H1 (cell line): ENCODE measurements at regions of chr1 and their contacts with region 1.

Region 1: DNA sequence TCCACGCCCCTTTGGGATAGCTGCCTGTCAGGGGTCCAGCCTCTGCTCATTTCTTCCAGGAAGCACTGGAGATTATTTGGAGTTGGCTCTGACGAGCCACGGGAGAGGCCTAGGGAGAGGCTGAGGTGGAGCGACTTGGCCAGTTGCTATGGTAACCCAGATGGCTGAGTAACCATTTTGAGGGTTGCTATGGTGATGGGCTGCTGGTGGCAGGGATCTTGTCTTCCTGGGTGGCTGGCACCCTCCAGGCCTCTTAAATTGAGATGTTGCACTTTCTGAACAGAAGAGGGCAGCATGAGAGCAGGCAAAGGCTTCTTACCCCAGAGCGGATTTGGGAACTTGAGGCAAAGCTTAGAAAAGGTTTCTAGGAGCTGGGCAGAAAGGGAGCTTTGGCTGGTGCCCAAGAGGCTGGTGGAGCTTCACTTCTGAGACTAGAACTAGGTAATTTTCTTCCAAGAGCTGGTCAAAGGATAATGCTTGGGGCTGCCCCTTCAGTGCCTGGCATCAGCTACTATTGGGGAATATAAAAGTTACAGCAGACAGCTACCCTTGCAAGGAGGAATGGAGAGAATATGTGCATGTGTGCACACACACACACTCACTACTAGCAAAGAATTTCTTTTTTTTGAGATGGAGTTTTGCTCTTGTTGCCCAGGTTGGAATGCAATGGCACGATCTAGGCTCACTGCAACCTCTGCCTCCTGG is 72.5 kb downstream of the NDUFS5 start:
- DNase-seq: peak; percentile 75 to 89
- H3K4me3 ChIP-seq: no peak overlapping the region
- H3K27ac ChIP-seq: peak overlapping the region; percentile 21; the same call in 1 of the 2 replicates
- H3K4me1 ChIP-seq: peaks cover 7 to 13% (median 12%) of the 10 kb centered on the region in 4 experiments
- H3K27me3 ChIP-seq: no peaks in the 10 kb centered on the region
- CTCF ChIP-seq: peak; percentile 40 to 88 (median 88)
- EP300 ChIP-seq: peak in 1 of 2 experiments; percentile 39; a peak in 1 of 3 replicates
- POLR2A ChIP-seq: no peak
- RAD21 ChIP-seq: peak; percentile 98 to 99

Region 2: GRCh38 chr1:39158327-39159086 is 59.8 kb after region 1 on chr1:
- CTCF ChIA-PET with region 1: interaction called, 15 read pairs
- POLR2A ChIA-PET with region 1: interaction called, 3 read pairs
- DNase-seq: no peak
- H3K4me3 ChIP-seq: peak overlapping the region; percentile 21 to 44 (median 34); a peak in 7 of 8 replicates
- H3K27ac ChIP-seq: peak overlapping the region; percentile 48
- H3K4me1 ChIP-seq: peaks cover 13 to 37% (median 25%) of the 10 kb centered on the region in 4 experiments; a peak in 6 of 7 replicates
- H3K27me3 ChIP-seq: no peaks in the 10 kb centered on the region
- CTCF ChIP-seq: peak in 1 of 3 experiments; percentile 1; a peak in 1 of 4 replicates
- EP300 ChIP-seq: no peak
- POLR2A ChIP-seq: peak in 1 of 2 experiments; percentile 62; a peak in 1 of 3 replicates
- RAD21 ChIP-seq: no peak

Region 3: GRCh38 chr1:39165049-39165448 is 66.4 kb after region 1 on chr1:
- CTCF ChIA-PET with region 1: interaction called, 10 read pairs
- POLR2A ChIA-PET with region 1: interaction called, 6 read pairs
- DNase-seq: no peak
- H3K4me3 ChIP-seq: no peak overlapping the region
- H3K27ac ChIP-seq: no peak overlapping the region
- H3K4me1 ChIP-seq: peaks cover 5 to 21% (median 12%) of the 10 kb centered on the region in 4 experiments; a peak in 5 of 7 replicates
- H3K27me3 ChIP-seq: no peaks in the 10 kb centered on the region
- CTCF ChIP-seq: no peak
- EP300 ChIP-seq: no peak
- POLR2A ChIP-seq: no peak
- RAD21 ChIP-seq: no peak

Region 4: GRCh38 chr1:39177682-39178081 is 79.0 kb after region 1 on chr1:
- CTCF ChIA-PET with region 1: interaction called, 20 read pairs
- POLR2A ChIA-PET with region 1: no interaction called
- DNase-seq: no peak
- H3K4me3 ChIP-seq: no peak overlapping the region
- H3K27ac ChIP-seq: no peak overlapping the region
- H3K4me1 ChIP-seq: peaks cover 0 to 16% (median 8%) of the 10 kb centered on the region in 4 experiments; a peak in 5 of 7 replicates
- H3K27me3 ChIP-seq: no peaks in the 10 kb centered on the region
- CTCF ChIP-seq: no peak
- EP300 ChIP-seq: no peak
- POLR2A ChIP-seq: no peak
- RAD21 ChIP-seq: no peak

Region 5: DNA sequence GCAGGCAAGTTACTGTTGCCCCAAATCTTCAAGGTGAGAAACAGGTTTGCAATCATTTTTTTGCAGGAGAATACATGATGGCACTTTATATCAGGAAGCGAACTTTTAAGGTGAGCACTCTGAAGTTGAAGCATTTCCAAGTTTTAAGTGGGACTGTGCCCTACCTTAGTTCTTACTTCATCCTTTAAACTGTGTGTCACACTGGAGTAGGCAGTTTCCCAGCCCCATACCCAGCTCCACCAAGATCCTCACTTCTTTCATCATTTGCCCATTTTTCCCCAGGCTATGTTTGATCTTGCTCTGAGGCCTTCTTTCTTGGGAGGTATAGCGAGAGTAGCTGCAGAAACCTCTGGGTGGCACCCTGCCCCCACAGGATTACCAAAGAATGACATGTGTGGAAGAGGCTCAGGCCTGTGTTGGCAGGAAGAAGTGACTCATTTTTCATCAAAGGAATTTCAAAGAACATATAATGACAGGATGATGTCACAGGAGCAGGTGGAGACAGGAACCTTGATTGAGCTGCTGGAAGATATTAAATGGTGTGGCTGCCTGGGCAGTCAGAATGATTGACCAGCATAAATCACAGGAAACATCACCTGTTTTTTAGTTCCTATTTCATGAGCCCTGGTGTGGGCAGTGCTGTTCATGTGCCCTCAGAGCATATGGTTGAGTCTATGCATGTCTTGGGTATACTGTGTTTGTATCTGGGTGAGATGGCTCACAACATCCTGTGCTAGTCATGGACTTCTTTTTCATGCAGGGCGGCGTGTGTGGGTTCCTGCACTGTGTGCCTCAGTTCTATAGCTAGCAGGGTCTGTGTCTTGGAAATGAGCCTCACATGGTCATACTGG is 85.0 kb after region 1 on chr1:
- CTCF ChIA-PET with region 1: interaction called, 130 read pairs
- POLR2A ChIA-PET with region 1: interaction called, 5 read pairs
- DNase-seq: peak in 1 of 2 experiments; percentile 59
- H3K4me3 ChIP-seq: no peak overlapping the region
- H3K27ac ChIP-seq: no peak overlapping the region
- H3K4me1 ChIP-seq: peaks cover 2 to 9% (median 3%) of the 10 kb centered on the region in 4 experiments; a peak in 4 of 7 replicates
- H3K27me3 ChIP-seq: no peaks in the 10 kb centered on the region
- CTCF ChIP-seq: peak; percentile 38 to 66 (median 58)
- EP300 ChIP-seq: no peak
- POLR2A ChIP-seq: no peak
- RAD21 ChIP-seq: peak; percentile 55 to 61

Region 6: GRCh38 chr1:39268112-39268581 is 169.4 kb after region 1 on chr1:
- CTCF ChIA-PET with region 1: interaction called, 19 read pairs
- POLR2A ChIA-PET with region 1: interaction called, 7 read pairs
- DNase-seq: no peak
- H3K4me3 ChIP-seq: peak overlapping the region; percentile 16 to 49 (median 22); a peak in 7 of 8 replicates
- H3K27ac ChIP-seq: peak overlapping the region; percentile 67
- H3K4me1 ChIP-seq: peaks cover 10 to 21% (median 18%) of the 10 kb centered on the region in 4 experiments; a peak in 6 of 7 replicates
- H3K27me3 ChIP-seq: no peaks in the 10 kb centered on the region
- CTCF ChIP-seq: no peak
- EP300 ChIP-seq: no peak
- POLR2A ChIP-seq: no peak
- RAD21 ChIP-seq: no peak